Sigmoid colon (tissue), 7 donors: ENCODE measurements at regions of chr1 and their contacts with region 1.

Region 1: GRCh38 chr1:33181921-33182341 is at the start of gene TRIM62:
- DNase-seq: peak; percentile 92
- H3K4me3 ChIP-seq: peak within 1 kb of the TSS; percentile 76 to 95 (median 88)
- H3K27ac ChIP-seq: peak within 1 kb of the TSS; percentile 84 to 91 (median 88)
- H3K4me1 ChIP-seq: peaks cover 0 to 28% (median 20%) of the 10 kb centered on the region in 4 donors
- H3K27me3 ChIP-seq: no peaks in the 10 kb centered on the region
- CTCF ChIP-seq: no peak
- EP300 ChIP-seq: no peak
- POLR2A ChIP-seq: peak; percentile 38
- total RNA-seq, gene TRIM62: 3.2 to 5.2 (median 4.5) TPM

Region 2: GRCh38 chr1:33127001-33127791 is 54.7 kb before region 1 on chr1:
- intact Hi-C with region 1: loop called (anchors 2 kb)
- DNase-seq: peak; percentile 99
- H3K4me3 ChIP-seq: peak overlapping the region; percentile 46 to 58 (median 55)
- H3K27ac ChIP-seq: peak overlapping the region; percentile 75 to 87 (median 82)
- H3K4me1 ChIP-seq: peaks cover 0 to 15% (median 12%) of the 10 kb centered on the region in 4 donors
- H3K27me3 ChIP-seq: no peaks in the 10 kb centered on the region
- CTCF ChIP-seq: peak; percentile 45 to 86 (median 80)
- EP300 ChIP-seq: peak in 1 of 4 donors; percentile 76
- POLR2A ChIP-seq: peak in 1 of 2 donors; percentile 18

Region 3: DNA sequence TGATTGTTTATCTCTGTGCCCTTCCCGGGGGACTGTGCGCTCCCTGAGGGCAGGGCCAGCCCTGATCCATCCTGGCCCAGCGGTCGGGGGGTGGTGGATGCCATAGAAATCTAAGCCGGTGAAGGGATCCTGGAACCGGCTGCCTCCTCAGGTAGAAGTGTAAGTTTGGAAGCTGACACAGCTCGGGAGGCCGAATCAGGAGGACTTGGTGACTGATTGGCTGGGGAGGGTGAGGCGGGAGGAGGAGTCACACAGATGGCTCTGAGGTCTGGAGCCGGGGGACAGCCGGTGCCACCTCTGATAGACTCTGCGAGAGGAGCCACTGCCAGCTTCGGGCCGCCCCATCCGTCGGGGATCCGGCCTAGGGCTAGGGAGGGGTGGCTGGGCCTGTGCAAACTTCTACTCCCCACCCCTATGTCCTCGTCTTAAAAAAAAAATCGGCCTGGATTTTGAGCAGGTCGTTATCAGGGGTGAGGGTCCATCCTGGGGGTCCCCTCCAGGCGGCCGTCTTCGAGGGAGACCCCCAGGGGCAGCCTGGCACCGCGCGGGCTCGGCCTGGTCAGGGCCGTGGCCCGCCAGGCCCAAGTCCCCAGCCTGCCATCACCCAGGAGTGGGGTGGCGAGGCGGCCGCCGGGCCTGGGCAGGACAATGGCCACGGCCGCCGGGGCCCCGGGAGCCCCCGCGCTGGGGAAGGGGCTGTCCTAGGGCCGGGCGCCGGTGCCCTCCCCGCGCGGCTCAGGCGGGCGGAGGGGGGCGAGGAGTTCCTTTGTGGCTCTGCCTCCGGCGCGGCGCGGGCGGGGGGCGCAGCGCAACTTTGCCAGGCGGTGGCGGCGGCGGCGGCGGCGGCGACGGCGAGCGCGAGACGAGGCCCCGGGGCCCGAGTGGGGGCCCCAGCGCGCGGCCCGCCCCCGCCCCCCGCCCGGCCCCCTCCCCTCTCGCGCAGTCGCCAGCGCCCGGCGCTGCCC is 73.7 kb after region 1 on chr1:
- intact Hi-C with region 1: loop called (anchors 2 kb)
- DNase-seq: peak; percentile 89
- H3K4me3 ChIP-seq: peak overlapping the region; percentile 21 to 73 (median 66)
- H3K27ac ChIP-seq: peak overlapping the region; percentile 91 to 96 (median 93)
- H3K4me1 ChIP-seq: peaks cover 0 to 43% (median 33%) of the 10 kb centered on the region in 4 donors
- H3K27me3 ChIP-seq: no peaks in the 10 kb centered on the region
- CTCF ChIP-seq: no peak
- EP300 ChIP-seq: no peak
- POLR2A ChIP-seq: peak; percentile 30 to 42